ENCODE measurements at regions of chr2 and their contacts with region 1.

Region 1: DNA sequence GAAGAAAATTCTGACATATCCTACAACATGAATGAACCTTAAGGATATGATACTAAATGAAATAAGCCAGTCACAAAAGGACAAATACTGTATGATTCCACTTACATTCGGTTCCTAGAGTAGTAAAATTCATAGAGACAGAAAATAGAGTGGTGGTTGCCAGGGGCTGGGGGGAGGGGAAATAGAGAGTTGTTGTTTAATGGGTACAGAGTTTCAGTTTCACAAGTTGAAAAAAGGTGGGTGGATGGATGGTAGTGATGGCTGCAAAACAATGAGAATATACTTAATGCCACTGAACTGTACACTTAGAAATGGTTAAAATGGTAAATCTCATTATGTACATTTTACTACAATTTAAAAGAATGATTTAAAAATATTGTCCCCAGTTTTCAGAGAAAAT is 53.3 kb upstream of the NFU1 start:
- DNase-seq: no peak
- H3K4me3 Mint-ChIP-seq: no peak overlapping the region
- H3K27ac Mint-ChIP-seq: peak overlapping the region; percentile 23
- H3K4me1 Mint-ChIP-seq: peaks cover 43% of the 10 kb centered on the region
- H3K27me3 Mint-ChIP-seq: no peaks in the 10 kb centered on the region

Region 2: DNA sequence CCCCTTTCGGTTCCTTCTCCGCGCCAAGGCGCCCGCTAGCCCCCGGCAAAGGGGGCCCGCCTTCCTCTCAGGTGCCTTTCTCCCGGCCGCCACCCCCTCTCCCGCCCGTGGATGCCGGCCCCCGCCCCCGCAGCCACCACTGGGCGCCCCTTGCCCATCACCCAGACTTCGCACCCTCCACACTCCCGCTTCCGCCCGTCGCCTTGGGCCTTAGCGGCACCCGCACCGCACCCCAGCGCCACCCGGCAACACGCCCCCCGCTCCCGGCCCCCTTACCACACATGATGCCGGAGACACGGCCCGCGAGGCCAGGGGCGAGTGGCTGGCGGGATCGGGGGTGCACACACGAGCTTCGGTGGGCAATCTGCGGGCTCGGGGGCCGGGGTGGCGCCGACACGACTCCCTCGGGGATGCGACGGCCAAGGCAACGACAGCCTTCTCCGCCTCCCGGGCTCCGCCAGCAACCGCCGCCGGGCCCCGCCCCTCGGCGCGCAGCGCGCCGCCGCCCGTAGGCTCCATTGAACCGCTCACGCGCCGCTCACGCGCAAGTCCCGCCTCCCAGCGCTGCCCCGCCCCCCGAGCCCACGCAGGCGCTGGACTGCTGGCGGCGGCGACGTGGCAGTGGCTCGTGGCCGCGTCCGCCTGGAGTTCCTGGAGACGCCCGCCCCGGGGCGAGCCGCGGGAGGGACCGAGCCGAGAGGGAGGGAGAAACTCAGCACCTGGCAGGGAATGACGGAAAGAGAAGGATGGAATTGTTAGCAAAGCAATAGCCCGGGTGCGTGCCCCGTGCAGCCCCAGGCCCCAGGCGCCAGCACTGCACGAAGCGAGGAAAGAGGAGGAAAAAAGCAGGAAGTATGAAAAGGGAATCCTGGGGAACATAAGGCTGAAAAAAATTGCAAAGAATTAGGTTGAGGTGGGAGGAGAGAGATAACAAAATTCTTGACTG is 103.4 kb before region 1 on chr2 and contains the start of gene GFPT1:
- intact Hi-C with region 1: no loop called
- DNase-seq: peak; percentile 92
- H3K4me3 Mint-ChIP-seq: peak within 1 kb of the TSS; percentile 88
- H3K27ac Mint-ChIP-seq: peak within 1 kb of the TSS; percentile 92
- H3K4me1 Mint-ChIP-seq: peaks cover 41% of the 10 kb centered on the region
- H3K27me3 Mint-ChIP-seq: no peaks in the 10 kb centered on the region
- total RNA-seq, gene GFPT1: 55.7 and 56.6 TPM in 2 replicates

Region 3: DNA sequence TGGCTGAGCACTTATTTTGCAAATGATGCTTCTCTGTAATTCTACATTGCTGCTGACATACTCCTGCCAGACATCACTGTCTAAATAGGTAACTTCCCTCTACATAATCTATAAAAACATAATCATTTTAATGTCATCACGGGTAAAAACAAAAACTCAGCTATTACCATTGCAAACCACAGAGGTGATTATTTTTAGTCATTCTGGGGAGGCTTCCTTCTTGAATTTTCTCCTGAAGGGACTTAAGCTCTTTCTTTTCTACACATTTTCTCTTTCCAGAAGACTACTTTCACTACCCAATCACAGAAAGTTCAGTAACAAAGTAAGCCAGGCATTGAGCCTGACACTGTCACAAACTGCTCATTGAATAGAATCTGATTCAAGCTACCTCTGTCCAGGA is 12.9 kb before region 1 on chr2:
- intact Hi-C with region 1: loop called (anchors 2 kb)
- DNase-seq: no peak
- H3K4me3 Mint-ChIP-seq: no peak overlapping the region
- H3K27ac Mint-ChIP-seq: peak overlapping the region; percentile 66
- H3K4me1 Mint-ChIP-seq: peaks cover 39% of the 10 kb centered on the region
- H3K27me3 Mint-ChIP-seq: no peaks in the 10 kb centered on the region

Region 4: GRCh38 chr2:69549421-69549820 is 58.9 kb after region 1 on chr2:
- intact Hi-C with region 1: no loop called
- DNase-seq: no peak
- H3K4me3 Mint-ChIP-seq: no peak overlapping the region
- H3K27ac Mint-ChIP-seq: no peak overlapping the region
- H3K4me1 Mint-ChIP-seq: peaks cover 19% of the 10 kb centered on the region
- H3K27me3 Mint-ChIP-seq: no peaks in the 10 kb centered on the region

Region 5: GRCh38 chr2:69572641-69573040 is 82.2 kb after region 1 on chr2:
- intact Hi-C with region 1: no loop called
- DNase-seq: no peak
- H3K4me3 Mint-ChIP-seq: no peak overlapping the region
- H3K27ac Mint-ChIP-seq: peak overlapping the region; percentile 5
- H3K4me1 Mint-ChIP-seq: peaks cover 46% of the 10 kb centered on the region
- H3K27me3 Mint-ChIP-seq: no peaks in the 10 kb centered on the region